ENCODE measurements at regions of chr14 and their contacts with region 1.

Region 1: GRCh38 chr14:77184396-77185092 is 2.9 kb downstream of the TMEM63C start:
- DNase-seq: no peak
- ATAC-seq: no peak
- H3K4me3 ChIP-seq: no peak overlapping the region
- H3K4me3 Mint-ChIP-seq: no peak overlapping the region
- H3K27ac ChIP-seq: no peak overlapping the region
- H3K27ac Mint-ChIP-seq: no peak overlapping the region
- H3K4me1 ChIP-seq: peaks cover 18 to 30% of the 10 kb centered on the region in 2 donors
- H3K4me1 Mint-ChIP-seq: peaks cover 13% of the 10 kb centered on the region
- H3K27me3 ChIP-seq: peaks cover 0 to 41% (median 4%) of the 10 kb centered on the region in 4 experiments
- H3K27me3 Mint-ChIP-seq: peaks cover 31% of the 10 kb centered on the region
- CTCF ChIP-seq: no peak

Region 2: GRCh38 chr14:77097700-77098528 is 86.6 kb before region 1 on chr14 and contains the start of gene CIPC:
- CTCF ChIA-PET with region 1: no interaction called
- POLR2A ChIA-PET with region 1: no interaction called
- intact Hi-C with region 1: no loop called
- DNase-seq: peak; percentile 99
- ATAC-seq: peak; percentile 85
- H3K4me3 ChIP-seq: peak within 1 kb of the TSS; percentile 85 to 99 (median 99)
- H3K4me3 Mint-ChIP-seq: peak within 1 kb of the TSS; percentile 86
- H3K27ac ChIP-seq: peak within 1 kb of the TSS; percentile 92 to 99
- H3K27ac Mint-ChIP-seq: peak within 1 kb of the TSS; percentile 96
- H3K4me1 ChIP-seq: peaks cover 45 to 51% of the 10 kb centered on the region in 2 donors
- H3K4me1 Mint-ChIP-seq: peaks cover 66% of the 10 kb centered on the region
- H3K27me3 ChIP-seq: no peaks in the 10 kb centered on the region
- H3K27me3 Mint-ChIP-seq: no peaks in the 10 kb centered on the region
- CTCF ChIP-seq: no peak
- total RNA-seq, gene CIPC: 46.8 and 47.0 TPM in 2 replicates

Region 3: DNA sequence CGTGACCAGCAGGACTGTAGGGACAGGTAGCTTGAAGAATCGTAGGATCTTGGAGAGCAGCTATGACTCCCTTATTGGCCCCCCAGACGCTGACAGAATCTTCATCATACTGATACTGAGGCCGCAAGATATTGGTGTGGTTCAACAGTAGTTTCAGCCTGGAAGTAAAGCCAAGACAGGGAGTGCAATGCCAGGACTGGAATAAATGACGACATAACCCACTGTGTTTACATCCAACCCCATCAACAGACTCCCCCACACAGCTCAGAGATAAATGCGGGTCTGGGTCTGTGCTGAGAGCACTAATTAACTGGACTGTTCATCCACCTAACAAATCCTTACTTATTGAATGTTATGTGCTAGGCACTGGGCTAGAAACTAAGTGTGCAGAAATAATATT is 222.2 kb after region 1 on chr14:
- CTCF ChIA-PET with region 1: no interaction called
- POLR2A ChIA-PET with region 1: interaction called, 10 read pairs
- intact Hi-C with region 1: no loop called
- DNase-seq: no peak
- ATAC-seq: no peak
- H3K4me3 ChIP-seq: no peak overlapping the region
- H3K4me3 Mint-ChIP-seq: no peak overlapping the region
- H3K27ac ChIP-seq: no peak overlapping the region
- H3K27ac Mint-ChIP-seq: no peak overlapping the region
- H3K4me1 ChIP-seq: peaks cover 3 to 5% of the 10 kb centered on the region in 2 donors
- H3K4me1 Mint-ChIP-seq: peaks cover 11% of the 10 kb centered on the region
- H3K27me3 ChIP-seq: no peaks in the 10 kb centered on the region
- H3K27me3 Mint-ChIP-seq: no peaks in the 10 kb centered on the region
- CTCF ChIP-seq: no peak

Measured in B cell (primary cell).